SK-N-SH (cell line): ENCODE measurements at regions of chr12 and their contacts with region 1.

Region 1: GRCh38 chr12:26119391-26119981 is 5.4 kb downstream of the BHLHE41 start:
- DNase-seq: peak; percentile 56
- H3K4me3 ChIP-seq: no peak overlapping the region
- H3K27ac ChIP-seq: peak overlapping the region in 1 of 2 experiments; percentile 4; a peak in 1 of 4 replicates
- H3K4me1 ChIP-seq: peaks cover 4 to 15% of the 10 kb centered on the region in 2 experiments; a peak in 3 of 4 replicates
- H3K27me3 ChIP-seq: no peaks in the 10 kb centered on the region
- CTCF ChIP-seq: peak; percentile 76
- EP300 ChIP-seq: no peak
- RAD21 ChIP-seq: peak; percentile 80

Region 2: GRCh38 chr12:25447046-25447445 is 672.4 kb before region 1 on chr12:
- CTCF ChIA-PET with region 1: no interaction called
- POLR2A ChIA-PET with region 1: no interaction called
- DNase-seq: no peak
- H3K4me3 ChIP-seq: no peak overlapping the region
- H3K27ac ChIP-seq: no peak overlapping the region
- H3K4me1 ChIP-seq: no peaks in the 10 kb centered on the region
- H3K27me3 ChIP-seq: no peaks in the 10 kb centered on the region
- CTCF ChIP-seq: no peak
- EP300 ChIP-seq: no peak
- RAD21 ChIP-seq: no peak

Region 3: GRCh38 chr12:25992026-25992782 is 127.3 kb before region 1 on chr12:
- CTCF ChIA-PET with region 1: no interaction called
- POLR2A ChIA-PET with region 1: no interaction called
- DNase-seq: no peak
- H3K4me3 ChIP-seq: no peak overlapping the region
- H3K27ac ChIP-seq: peak overlapping the region in 1 of 2 experiments; percentile 97; a peak in 2 of 4 replicates
- H3K4me1 ChIP-seq: peaks cover 16 to 42% of the 10 kb centered on the region in 2 experiments
- H3K27me3 ChIP-seq: no peaks in the 10 kb centered on the region
- CTCF ChIP-seq: no peak
- EP300 ChIP-seq: no peak
- RAD21 ChIP-seq: no peak

Region 4: GRCh38 chr12:26097046-26097878 is 22.2 kb before region 1 on chr12:
- CTCF ChIA-PET with region 1: interaction called, 27 read pairs
- POLR2A ChIA-PET with region 1: no interaction called
- DNase-seq: peak; percentile 75
- H3K4me3 ChIP-seq: peak overlapping the region in 1 of 2 experiments; percentile 20; a peak in 1 of 4 replicates
- H3K27ac ChIP-seq: no peak overlapping the region
- H3K4me1 ChIP-seq: no peaks in the 10 kb centered on the region; a peak in 1 of 4 replicates
- H3K27me3 ChIP-seq: no peaks in the 10 kb centered on the region
- CTCF ChIP-seq: peak; percentile 98
- EP300 ChIP-seq: no peak
- RAD21 ChIP-seq: peak; percentile 88